Posterior cingulate gyrus (tissue), 11 donors: ENCODE measurements at regions of chr1 and their contacts with region 1.

Region 1: DNA sequence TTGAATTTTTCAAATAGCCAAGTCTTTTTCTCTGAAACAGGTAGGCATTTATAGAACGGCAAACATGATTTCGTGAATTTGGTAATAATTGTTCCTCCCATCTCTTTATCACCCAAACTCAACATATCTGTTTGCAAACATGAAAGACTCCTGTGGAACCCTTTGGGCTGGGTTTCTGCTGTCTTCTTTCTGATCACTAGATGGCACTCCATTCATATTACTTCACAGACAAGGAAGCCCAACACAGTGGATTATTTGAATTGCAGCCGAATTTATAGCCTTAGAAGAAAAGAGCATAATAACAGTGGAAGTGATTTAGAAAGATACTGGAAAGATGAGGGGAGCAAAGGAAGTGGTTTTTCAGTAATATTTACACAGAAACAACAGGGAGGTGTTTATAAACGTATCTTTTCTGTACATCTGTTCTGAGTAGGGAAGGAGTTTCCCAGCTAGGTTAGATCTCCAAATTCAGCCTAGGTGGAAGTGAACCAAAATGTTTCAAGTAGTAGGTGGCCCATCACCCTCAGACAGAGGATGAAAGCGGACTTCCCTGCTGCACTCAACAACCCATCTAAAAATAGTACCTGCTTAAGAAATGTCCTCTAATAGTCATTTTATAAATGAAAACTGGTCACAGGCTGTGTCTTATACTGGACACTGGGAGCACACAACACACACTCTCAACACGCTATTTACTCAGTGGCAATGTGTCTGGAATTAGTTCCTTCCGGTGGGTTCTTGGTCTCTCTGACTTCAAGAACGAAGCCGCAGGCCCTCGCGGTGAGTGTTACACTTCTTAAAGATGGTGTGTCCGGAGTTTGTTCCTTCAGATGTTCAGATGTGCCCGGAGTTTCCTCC is 67.6 kb downstream of the MAP3K21 start:
- DNase-seq: no peak

Region 2: DNA sequence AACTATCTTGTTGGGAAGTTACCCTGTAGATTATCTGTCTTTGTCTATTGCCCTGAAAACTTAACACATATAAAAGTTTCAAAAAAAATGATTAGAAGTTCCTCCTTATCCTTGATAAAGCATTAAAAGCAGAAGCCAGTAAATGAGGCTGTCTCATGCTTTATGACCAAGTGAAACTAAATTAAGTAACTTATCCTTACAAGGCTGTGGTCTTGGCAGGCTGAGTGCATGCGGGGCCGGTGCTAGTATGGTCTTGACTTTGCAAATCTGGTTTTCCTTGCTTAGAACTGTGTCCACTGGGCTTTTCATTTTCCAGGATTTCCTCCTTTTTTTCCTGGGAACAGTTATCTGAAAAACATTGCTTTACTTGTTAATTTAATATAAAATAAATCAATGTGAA is 142.6 kb before region 1 on chr1:
- intact Hi-C with region 1: no loop called
- DNase-seq: peak in 1 of 10 donors; percentile 70

Region 3: GRCh38 chr1:234000557-234001041 is 605.5 kb after region 1 on chr1:
- intact Hi-C with region 1: loop called (anchors 5 kb)
- DNase-seq: peak in 2 of 10 donors; percentile 16 to 70

Region 4: DNA sequence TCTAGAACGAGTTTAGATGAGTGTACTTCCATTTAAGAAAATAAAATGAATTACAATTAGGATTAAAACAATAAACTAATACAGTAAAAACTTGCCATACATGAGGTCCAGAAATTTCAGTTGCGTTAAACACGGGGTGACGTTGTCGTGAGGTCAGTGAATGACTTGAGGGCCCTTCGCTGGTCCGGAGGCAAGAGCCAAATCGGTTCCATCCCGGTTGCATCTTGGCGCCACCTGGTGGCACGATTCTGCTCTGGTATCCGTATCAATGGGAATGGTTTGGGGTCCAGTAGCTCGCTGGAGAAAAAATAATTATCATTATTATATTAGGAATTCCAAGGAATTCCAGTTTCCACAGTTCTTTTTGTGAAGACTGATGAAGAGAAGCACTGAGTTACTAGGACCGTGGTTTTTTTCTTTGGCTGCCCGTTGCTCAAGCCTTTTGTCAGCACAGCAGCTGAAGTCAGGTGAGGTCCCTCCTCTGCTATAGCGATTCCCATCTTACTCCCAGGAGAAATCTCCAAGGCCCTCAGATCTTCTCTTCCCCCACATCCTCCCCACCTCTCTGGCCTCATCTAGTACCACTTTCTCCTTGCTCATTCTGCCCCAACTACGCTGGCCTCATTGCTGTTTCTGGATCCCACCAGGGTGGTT is 670.8 kb after region 1 on chr1:
- intact Hi-C with region 1: loop called (anchors 2 kb)
- DNase-seq: peak; percentile 47 to 95 (median 82)